GM23248 (cell line): ENCODE measurements at regions of chr6 and their contacts with region 1.

Region 1: DNA sequence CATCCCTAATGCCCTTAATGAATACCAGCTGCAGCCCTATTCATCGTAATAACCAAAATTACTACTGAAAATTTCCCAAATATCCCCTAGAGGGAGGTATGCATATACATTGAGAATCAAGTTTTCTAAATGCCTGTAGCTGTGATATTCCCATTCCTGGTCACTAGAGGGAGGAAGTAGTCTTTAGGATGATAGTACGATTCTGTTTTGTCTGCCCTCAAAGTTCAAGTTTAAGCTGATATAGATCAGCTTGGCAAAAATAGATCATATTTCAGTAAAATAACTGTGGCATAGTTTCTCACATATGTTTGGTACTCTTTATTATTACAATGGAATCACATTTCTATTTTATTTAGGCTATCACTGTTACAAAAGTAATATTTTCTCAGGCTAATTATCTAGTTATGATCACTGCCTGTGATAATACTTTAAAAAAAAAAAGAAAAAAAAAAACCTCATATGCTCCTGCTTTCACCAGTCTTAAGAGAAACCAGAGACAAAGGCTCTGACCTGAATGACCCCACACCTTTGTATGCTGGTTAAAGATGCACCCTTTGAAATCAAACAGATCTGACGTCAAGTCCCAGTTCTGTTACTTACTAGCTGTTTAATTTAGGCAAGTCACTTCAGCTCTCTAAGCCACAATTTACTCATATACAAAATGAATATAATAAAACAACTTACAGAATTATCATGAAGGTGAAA is 11.0 kb downstream of the TSPYL1 start:
- DNase-seq: peak; percentile 85
- H3K4me3 ChIP-seq: no peak overlapping the region
- H3K27ac ChIP-seq: peak overlapping the region; percentile 50; the same call in 1 of the 2 replicates
- H3K4me1 ChIP-seq: peaks cover 30% of the 10 kb centered on the region
- H3K27me3 ChIP-seq: no peaks in the 10 kb centered on the region

Region 2: GRCh38 chr6:115643755-115644154 is 625.0 kb before region 1 on chr6:
- in situ Hi-C with region 1: no loop called
- DNase-seq: peak; percentile 18
- H3K4me3 ChIP-seq: no peak overlapping the region
- H3K27ac ChIP-seq: no peak overlapping the region
- H3K4me1 ChIP-seq: no peaks in the 10 kb centered on the region
- H3K27me3 ChIP-seq: no peaks in the 10 kb centered on the region

Region 3: DNA sequence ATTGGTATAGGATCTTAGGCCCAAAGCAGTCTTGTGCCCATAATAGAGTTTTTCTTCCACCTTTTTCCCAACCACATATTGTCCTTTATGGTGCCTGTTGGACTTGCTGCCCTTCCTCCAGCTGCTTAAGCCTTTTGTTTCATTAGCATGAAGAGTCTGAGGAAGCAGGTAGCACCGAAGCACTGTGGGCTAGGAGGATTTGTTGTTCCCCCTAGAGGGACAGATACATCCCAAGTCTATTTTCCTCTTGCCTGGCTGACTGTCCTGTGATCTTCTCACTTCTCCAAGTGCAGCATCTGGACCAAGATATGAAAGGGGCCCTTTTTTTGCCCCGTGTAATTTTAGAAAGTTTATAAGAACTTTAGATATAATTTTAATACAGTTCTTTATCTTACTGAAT is 92.1 kb before region 1 on chr6:
- in situ Hi-C with region 1: no loop called
- DNase-seq: no peak
- H3K4me3 ChIP-seq: no peak overlapping the region
- H3K27ac ChIP-seq: no peak overlapping the region
- H3K4me1 ChIP-seq: no peaks in the 10 kb centered on the region
- H3K27me3 ChIP-seq: no peaks in the 10 kb centered on the region

Region 4: GRCh38 chr6:116531675-116532570 is 263.2 kb after region 1 on chr6:
- in situ Hi-C with region 1: loop called (anchors 10 kb)
- DNase-seq: peak; percentile 81
- H3K4me3 ChIP-seq: no peak overlapping the region
- H3K27ac ChIP-seq: no peak overlapping the region
- H3K4me1 ChIP-seq: peaks cover 12% of the 10 kb centered on the region
- H3K27me3 ChIP-seq: no peaks in the 10 kb centered on the region

Region 5: DNA sequence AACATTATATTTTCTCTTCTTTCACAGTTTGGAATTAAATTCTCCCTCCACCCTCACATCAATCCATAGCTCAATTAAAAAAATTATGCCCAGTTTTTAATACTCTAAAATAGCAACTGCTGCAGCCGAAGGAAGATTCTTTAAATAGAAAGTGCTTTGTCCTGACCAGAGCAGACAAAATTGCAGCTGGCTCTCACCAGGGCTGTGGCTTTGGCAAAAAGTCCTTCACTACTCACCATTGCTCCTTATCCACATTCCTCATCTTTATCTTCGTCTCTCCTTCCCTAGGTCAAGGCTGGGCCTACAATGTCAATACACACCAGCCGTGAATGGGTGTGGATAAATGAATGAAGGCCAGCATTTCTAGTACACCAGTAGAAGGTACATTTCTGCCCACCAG is 888.7 kb after region 1 on chr6:
- in situ Hi-C with region 1: no loop called
- DNase-seq: no peak
- H3K4me3 ChIP-seq: no peak overlapping the region
- H3K27ac ChIP-seq: no peak overlapping the region
- H3K4me1 ChIP-seq: no peaks in the 10 kb centered on the region
- H3K27me3 ChIP-seq: no peaks in the 10 kb centered on the region

Region 6: DNA sequence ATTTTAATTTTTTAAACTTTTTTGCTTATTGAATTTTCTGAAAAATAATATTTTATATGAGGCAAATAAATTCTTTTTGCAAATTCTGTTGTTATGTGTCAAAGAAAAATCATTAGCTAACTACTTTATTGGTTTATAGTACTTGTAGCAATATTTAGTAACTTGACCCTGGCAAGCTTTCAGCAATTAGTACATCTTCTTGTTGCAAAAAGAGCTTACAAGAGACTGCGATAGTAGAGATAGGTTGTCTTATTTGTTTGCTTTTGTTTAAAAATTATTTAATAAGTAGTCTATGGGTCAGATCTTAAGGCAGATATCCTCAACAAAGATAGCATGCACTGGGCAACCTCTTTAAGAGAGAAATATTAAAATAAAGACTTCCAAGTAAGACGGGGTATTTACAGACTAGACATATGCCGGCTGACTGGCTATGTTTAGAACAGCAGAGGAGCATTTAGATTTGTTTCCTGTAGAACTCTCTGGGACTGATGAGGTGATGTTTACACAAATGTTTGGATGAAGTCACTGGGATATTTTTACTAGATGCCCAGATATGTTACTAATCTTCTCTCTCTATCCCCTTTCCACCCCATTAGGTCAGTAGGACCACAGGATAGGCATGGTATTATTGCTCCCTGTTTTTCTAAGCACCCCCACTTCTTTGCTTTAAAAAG is 1021.6 kb after region 1 on chr6:
- in situ Hi-C with region 1: no loop called
- DNase-seq: no peak
- H3K4me3 ChIP-seq: no peak overlapping the region
- H3K27ac ChIP-seq: no peak overlapping the region
- H3K4me1 ChIP-seq: no peaks in the 10 kb centered on the region
- H3K27me3 ChIP-seq: no peaks in the 10 kb centered on the region